ENCODE measurements at regions of chr11 and their contacts with region 1.

Region 1: DNA sequence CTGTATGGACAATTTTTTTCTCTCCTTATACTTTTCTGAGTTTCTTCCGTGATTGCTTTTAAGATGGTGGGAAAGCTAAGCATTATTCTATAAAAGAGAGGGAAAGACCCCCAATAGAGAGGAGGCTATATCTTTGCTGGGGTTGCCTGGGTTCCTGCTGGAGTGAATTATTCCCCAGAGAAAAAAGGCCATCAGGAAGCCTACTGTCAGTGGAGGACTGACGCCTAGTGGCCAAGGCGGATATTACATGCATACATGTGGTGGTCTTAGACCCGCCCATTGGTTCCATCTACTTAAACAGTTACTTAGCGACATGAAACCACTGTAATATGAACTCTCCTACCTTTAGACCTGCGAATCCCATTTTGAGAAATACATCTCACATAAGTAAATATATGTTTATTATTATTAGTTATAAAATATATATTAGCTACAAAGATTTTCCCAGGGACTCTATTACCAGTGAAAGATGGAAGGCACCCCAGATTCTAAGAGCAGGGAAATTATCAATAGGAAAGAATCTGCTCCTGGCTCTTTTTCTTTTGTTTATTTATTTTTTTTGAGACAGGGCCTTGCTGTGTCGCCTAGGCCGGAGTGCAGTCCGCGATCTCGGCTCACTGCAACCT is 15.7 kb upstream of the PGA3 start:
- DNase-seq: peak; percentile 61 to 78 (median 78)
- H3K4me3 ChIP-seq: no peak overlapping the region
- H3K27ac ChIP-seq: no peak overlapping the region
- H3K4me1 ChIP-seq: no peaks in the 10 kb centered on the region
- H3K27me3 ChIP-seq: no peaks in the 10 kb centered on the region
- CTCF ChIP-seq: peak; percentile 71 to 80 (median 77)
- EP300 ChIP-seq: no peak
- POLR2A ChIP-seq: no peak

Region 2: GRCh38 chr11:60825571-60826189 is 361.9 kb before region 1 on chr11:
- intact Hi-C with region 1: loop called in 2 of 4 experiments (anchors 2 to 5 kb)
- DNase-seq: no peak
- H3K4me3 ChIP-seq: no peak overlapping the region
- H3K27ac ChIP-seq: no peak overlapping the region
- H3K4me1 ChIP-seq: peaks cover 2% of the 10 kb centered on the region
- H3K27me3 ChIP-seq: no peaks in the 10 kb centered on the region
- CTCF ChIP-seq: no peak
- EP300 ChIP-seq: no peak
- POLR2A ChIP-seq: no peak

Measured in ovary (tissue), 10 donors.